A549 (cell line): ENCODE measurements at regions of chr18 and their contacts with region 1.

Region 1: DNA sequence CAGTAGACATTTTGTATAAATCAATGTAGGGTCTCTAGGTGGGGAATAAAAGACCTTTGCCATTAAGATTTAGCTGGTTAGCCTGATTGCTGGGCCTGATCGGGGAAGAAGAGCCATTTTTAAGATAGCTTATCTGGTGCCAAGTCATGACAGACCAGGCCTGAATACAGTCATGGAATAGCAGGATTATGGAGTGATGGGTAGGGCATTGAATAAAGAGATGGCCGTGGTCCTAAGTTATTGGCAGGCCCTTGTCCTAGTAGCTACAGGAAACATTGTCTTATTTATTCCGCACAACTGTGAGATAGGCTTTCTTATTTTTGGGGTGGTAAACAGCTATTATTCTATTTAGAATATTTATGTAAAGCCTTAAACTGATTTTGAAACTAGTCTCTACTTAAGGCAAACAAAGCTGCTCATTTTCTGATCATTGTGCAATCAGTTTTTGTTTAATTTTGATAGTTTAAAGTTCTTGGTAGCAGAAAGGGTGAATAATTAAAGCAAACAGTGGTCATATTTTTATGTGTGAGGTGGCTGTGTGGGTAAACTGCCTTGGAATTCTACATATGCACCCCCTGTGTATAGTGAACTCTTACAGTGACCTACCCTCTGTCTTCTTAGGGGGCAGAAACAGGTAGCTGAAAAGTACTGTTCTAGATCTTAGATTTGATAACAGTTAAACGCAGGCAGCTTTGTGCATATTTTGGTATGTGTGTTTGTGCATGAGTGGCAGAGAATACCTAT is 22.6 kb downstream of the ZNF236 start:
- DNase-seq: peak; percentile 36 to 71
- ATAC-seq: peak; percentile 88 to 95
- H3K4me3 ChIP-seq: peak overlapping the region; percentile 22; the same call in 2 of the 3 replicates
- H3K27ac ChIP-seq: peak overlapping the region; percentile 88 to 90
- H3K4me1 ChIP-seq: peaks cover 82% of the 10 kb centered on the region
- CTCF ChIP-seq: no peak
- EP300 ChIP-seq: peak; percentile 60 to 74; a peak in 3 of 5 replicates
- POLR2A ChIP-seq: no peak
- RAD21 ChIP-seq: no peak

Region 2: DNA sequence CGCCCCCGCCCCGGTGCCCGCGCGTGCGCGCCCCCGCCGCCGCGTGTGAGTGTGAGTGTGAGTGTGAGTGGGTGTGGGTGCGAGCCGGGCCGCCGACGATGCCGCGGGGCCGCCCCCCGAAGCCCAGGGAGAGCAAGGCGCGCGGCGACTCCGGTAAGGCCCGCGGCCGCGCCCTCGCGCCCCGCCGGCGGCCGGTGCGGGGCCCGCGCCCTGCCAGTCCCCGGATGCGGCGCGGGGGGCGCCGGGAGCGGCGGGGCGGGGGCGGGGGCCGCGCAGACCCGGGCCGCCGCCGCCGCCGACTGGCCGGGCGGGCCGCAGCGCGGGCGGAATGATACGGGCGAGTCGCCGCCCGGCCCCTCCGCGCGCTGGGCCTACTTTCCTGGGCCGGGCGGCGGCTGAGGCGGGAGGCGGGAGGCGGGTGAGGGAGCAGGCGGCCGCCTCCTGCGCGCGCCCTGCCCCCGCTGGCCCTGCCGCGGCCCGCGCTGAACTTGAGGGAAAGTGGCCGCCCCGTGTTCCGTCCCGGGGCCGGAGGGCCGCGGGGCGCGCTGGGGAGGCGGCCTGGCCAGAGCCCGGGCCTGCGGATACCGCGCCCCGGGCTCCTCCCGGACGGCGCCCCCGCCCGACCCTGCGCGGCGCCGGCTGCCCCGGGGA is 22.3 kb before region 1 on chr18 and contains the start of gene ZNF236:
- CTCF ChIA-PET with region 1: interaction called, 10 read pairs
- POLR2A ChIA-PET with region 1: interaction called, 3 read pairs
- DNase-seq: peak; percentile 34 to 76
- ATAC-seq: peak; percentile 56 to 78
- H3K4me3 ChIP-seq: peak within 1 kb of the TSS; percentile 71
- H3K27ac ChIP-seq: peak within 1 kb of the TSS; percentile 92 to 100
- H3K4me1 ChIP-seq: peaks cover 28% of the 10 kb centered on the region
- CTCF ChIP-seq: no peak
- EP300 ChIP-seq: no peak
- POLR2A ChIP-seq: 0 out of 2 replicates have a peak, but pooled peaks have one; percentile 43
- RAD21 ChIP-seq: no peak
- polyA plus RNA-seq, gene ZNF236: 7.5 and 7.8 TPM in 2 replicates

Region 3: DNA sequence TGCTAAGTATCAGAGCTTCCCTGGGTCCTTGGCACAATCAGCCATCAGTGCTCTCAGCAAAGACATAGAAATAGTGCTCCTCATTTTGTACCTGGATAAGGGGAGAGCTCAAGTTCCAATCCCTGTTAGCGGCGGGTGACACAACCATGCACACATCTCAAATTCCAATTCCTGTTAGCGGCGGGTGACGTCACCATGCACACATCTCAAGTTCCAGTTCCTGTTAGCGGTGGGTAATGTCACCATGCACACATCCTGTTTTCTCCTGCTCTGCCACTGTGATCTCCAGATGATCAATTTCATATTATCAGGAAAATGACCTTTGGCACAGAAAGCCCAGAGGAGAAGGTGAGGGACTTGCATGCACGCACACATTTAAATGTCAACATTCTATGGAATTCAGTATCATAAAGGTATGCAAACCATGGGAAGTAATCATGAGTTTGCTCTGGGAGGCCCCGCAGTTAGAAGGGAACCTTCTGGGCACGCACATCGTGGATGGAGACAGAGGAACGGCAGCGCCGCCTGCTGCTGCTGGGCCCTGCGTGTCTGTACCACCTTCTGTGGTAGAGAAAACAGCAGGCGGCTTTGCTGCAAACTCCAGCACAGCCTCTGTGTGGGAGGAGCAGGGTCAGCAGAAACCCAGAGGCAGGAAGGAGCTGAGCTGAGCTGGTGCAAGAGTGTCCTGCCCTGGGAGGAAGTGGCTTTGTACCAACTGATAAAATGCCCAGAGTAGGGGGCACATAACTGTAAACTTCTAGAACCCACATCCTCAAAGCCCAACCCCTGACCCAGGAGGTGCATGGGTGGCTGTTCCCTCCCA is 209.9 kb after region 1 on chr18:
- CTCF ChIA-PET with region 1: no interaction called
- POLR2A ChIA-PET with region 1: no interaction called
- DNase-seq: peak; percentile 66 to 82
- ATAC-seq: peak; percentile 96
- H3K4me3 ChIP-seq: no peak overlapping the region
- H3K27ac ChIP-seq: peak overlapping the region; percentile 80 to 89
- H3K4me1 ChIP-seq: peaks cover 34% of the 10 kb centered on the region
- CTCF ChIP-seq: peak; percentile 57
- EP300 ChIP-seq: no peak
- POLR2A ChIP-seq: no peak
- RAD21 ChIP-seq: peak; percentile 66 to 73